ENCODE measurements at regions of chr9 and their contacts with region 1.

Region 1: GRCh38 chr9:123338710-123339665 is 17.0 kb upstream of the CRB2 start:
- DNase-seq: peak; percentile 80
- H3K4me3 Mint-ChIP-seq: peak overlapping the region; percentile 77
- H3K27ac Mint-ChIP-seq: peak overlapping the region; percentile 97
- H3K4me1 Mint-ChIP-seq: peaks cover 36% of the 10 kb centered on the region
- H3K27me3 Mint-ChIP-seq: no peaks in the 10 kb centered on the region

Region 2: DNA sequence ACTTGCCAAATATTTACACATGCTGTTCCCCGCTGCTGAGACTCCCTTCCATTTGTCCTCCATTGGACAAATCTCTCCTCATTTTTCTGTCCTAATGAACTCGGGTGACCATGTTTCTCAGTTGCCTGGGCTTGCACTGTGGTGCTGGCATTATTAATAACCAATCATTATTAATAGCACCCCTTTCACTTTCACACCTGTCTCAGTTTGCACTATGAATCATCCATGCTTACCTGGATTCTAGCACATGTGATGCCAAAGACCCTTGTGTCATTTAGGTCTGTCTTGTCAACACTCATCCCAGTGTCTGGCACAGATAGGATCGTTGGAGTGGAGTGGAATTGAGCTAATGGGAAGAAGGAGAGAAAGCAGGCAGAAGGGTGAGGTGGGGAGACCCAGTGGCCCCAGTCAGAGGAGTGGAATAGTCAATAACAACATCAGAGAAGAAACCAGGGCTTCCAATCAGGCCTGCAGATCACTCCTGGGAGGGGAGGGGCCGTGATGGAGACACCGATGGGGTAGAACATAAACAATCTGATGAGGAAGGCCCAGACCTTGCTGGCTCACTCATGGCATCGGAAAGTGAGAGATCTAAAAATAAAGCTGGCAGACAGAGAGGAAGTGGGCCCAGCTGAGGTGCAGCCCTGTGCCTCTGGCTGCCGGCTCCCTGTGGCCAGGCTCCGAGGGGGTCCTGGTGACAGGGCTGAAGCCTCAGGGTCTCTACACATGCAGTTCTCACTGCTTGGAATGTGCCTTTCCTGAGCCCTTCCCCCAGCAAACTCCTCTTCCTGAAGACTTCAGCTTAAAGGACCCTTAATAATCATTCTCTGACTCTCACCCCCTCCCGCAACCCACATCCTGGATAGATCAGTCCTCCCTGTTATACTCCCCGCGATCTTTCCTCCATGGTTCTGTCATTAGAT is 16.5 kb before region 1 on chr9:
- CTCF ChIA-PET with region 1: interaction called, 6 read pairs
- POLR2A ChIA-PET with region 1: interaction called, 48 read pairs
- DNase-seq: peak; percentile 78
- H3K4me3 Mint-ChIP-seq: peak overlapping the region; percentile 30
- H3K27ac Mint-ChIP-seq: peak overlapping the region; percentile 81
- H3K4me1 Mint-ChIP-seq: peaks cover 48% of the 10 kb centered on the region
- H3K27me3 Mint-ChIP-seq: no peaks in the 10 kb centered on the region

Region 3: DNA sequence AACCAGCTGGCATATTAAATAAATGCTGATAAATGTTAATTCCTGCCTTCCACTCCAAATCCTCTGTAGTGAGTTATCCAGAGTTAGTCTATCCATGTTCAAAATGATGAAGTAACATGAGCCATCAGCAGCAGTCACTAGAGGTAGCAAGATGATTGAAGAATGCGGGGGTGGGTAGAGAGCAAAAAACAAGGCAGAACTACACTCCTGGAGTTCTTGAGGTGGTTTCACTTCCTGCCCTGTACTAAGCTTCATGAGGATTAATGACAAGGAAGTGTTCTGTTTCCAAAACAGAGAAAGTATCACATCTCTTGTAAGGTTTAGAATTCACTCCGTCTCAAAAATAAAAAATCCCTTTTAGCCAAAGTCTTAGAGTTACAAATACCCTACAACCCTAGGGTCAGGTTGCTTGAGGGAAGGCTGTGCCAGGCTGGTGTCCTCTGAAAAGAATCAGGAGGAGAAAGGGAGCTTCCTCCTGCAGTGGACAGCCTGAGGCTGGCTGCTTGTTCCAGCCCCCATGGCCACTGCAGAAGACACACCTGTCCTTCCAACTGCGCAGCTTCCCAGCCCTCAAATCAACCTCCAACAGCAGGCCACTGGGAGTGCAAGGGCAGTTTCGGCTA is 410.7 kb after region 1 on chr9:
- CTCF ChIA-PET with region 1: no interaction called
- POLR2A ChIA-PET with region 1: no interaction called
- DNase-seq: no peak
- H3K4me3 Mint-ChIP-seq: no peak overlapping the region
- H3K27ac Mint-ChIP-seq: no peak overlapping the region
- H3K4me1 Mint-ChIP-seq: peaks cover 3% of the 10 kb centered on the region
- H3K27me3 Mint-ChIP-seq: no peaks in the 10 kb centered on the region

Measured in activated CD4-positive, alpha-beta memory T cell treated with anti-CD3 and anti-CD28 coated beads, Interleukin-2, amount 10 ng/mL, durations not matched to agents 7 days and 5 days (primary cell).